Common myeloid progenitor, CD34-positive (primary cell): ENCODE measurements at regions of chr4 and their contacts with region 1.

Region 1: GRCh38 chr4:185529413-185529812 is 5.9 kb downstream of the PDLIM3 start:
- DNase-seq: no peak
- H3K4me3 ChIP-seq: no peak overlapping the region
- H3K27ac ChIP-seq: no peak overlapping the region
- H3K4me1 ChIP-seq: no peaks in the 10 kb centered on the region
- H3K27me3 ChIP-seq: peaks cover 9 to 94% (median 45%) of the 10 kb centered on the region in 5 experiments

Region 2: GRCh38 chr4:185514182-185514697 is 15.2 kb before region 1 on chr4:
- CTCF ChIA-PET with region 1: interaction called, 13 read pairs
- POLR2A ChIA-PET with region 1: no interaction called
- DNase-seq: no peak
- H3K4me3 ChIP-seq: no peak overlapping the region
- H3K27ac ChIP-seq: no peak overlapping the region
- H3K4me1 ChIP-seq: peaks cover 3 to 11% (median 5%) of the 10 kb centered on the region in 4 experiments
- H3K27me3 ChIP-seq: peaks cover 23 to 89% (median 44%) of the 10 kb centered on the region in 5 experiments